ENCODE measurements at regions of chr5 and their contacts with region 1.

Region 1: DNA sequence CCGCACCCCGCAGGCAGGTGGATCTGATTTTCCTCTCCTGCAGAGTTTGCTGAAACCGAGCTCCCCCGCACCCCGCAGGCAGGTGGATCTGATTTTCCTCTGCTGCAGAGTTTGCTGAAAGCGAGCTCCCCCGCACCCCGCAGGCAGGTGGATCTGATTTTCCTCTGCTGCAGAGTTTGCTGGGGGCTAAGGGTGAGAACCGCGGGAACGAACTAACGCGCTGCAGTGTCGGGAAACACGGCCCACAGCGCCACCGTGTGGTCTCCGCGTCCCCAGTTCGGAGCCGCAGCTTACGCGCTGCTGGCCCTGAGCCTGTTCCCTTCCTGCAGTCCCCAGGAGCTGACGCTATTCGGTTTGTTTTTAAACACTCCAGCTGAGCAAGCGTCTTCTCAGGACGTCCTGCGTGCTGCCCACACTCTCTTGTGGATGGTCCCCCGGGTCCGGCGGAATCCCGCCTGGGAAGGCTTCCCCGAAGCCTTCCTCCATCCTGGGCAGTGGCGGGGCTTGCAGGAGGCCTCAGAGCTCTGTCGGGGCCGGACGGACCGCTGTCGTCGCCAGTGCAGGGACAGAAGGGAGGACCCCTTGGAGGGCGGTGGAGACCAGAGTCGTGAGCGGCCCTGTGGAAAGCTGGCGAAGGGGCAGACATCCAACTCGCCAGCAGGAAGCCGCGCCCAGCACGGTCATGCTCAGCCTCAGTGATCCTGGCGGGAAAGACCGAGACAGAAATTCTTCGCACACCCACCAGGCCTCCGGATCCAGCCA is 121.2 kb upstream of the LPCAT1 start:
- DNase-seq: peak; percentile 91
- H3K4me3 ChIP-seq: peak overlapping the region; percentile 22 to 54; a peak in 3 of 4 replicates
- H3K27ac ChIP-seq: no peak overlapping the region
- H3K4me1 ChIP-seq: peaks cover 0 to 4% of the 10 kb centered on the region in 2 experiments; a peak in 1 of 4 replicates
- H3K27me3 ChIP-seq: peaks cover 25% of the 10 kb centered on the region
- CTCF ChIP-seq: peak; percentile 73
- EP300 ChIP-seq: no peak
- RAD21 ChIP-seq: peak; percentile 84

Region 2: DNA sequence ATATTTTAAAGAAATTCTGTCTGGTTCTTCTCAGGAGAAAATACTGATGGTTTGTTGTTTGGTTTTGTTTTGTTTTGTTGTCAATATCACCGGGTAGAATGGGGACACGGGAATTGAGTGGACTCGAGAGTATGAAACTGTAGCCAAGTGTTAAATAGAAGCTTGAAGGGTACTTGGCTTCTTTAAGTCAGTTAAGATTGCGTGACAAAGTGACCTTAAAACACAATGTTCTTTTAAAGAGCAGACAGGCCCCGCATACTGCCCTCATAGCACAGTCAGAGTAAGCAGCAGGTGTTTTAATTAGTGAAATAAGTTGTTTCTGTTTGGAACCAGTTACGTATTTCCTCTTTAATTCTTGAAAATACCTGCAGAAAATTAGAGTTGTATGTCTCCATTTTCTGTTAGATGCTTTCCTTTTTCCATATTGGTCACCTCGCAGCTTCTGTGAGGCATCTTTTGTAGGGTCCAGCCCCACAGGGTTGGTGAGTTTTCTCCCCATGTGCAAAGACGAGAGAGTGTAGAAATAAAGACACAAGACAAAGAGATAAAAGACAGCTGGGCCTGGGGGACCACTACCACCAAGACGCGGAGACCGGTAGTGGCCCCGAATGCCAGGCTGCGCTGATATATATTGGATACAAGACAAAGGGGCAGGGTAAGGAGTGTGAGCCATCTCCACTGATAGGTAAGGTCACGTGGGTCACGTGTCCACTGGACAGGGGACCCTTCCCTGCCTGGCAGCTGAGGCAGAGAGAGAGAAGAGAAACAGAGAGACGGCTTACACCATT is 742.7 kb before region 1 on chr5:
- CTCF ChIA-PET with region 1: no interaction called
- POLR2A ChIA-PET with region 1: no interaction called
- DNase-seq: no peak
- H3K4me3 ChIP-seq: no peak overlapping the region
- H3K27ac ChIP-seq: no peak overlapping the region
- H3K4me1 ChIP-seq: no peaks in the 10 kb centered on the region
- H3K27me3 ChIP-seq: no peaks in the 10 kb centered on the region
- CTCF ChIP-seq: no peak
- EP300 ChIP-seq: no peak
- RAD21 ChIP-seq: no peak

Region 3: GRCh38 chr5:1204693-1205242 is 440.2 kb before region 1 on chr5:
- CTCF ChIA-PET with region 1: interaction called, 23 read pairs
- POLR2A ChIA-PET with region 1: no interaction called
- DNase-seq: peak; percentile 76
- H3K4me3 ChIP-seq: no peak overlapping the region
- H3K27ac ChIP-seq: no peak overlapping the region
- H3K4me1 ChIP-seq: no peaks in the 10 kb centered on the region
- H3K27me3 ChIP-seq: peaks cover 59% of the 10 kb centered on the region
- CTCF ChIP-seq: peak; percentile 21
- EP300 ChIP-seq: no peak
- RAD21 ChIP-seq: peak; percentile 41

Region 4: DNA sequence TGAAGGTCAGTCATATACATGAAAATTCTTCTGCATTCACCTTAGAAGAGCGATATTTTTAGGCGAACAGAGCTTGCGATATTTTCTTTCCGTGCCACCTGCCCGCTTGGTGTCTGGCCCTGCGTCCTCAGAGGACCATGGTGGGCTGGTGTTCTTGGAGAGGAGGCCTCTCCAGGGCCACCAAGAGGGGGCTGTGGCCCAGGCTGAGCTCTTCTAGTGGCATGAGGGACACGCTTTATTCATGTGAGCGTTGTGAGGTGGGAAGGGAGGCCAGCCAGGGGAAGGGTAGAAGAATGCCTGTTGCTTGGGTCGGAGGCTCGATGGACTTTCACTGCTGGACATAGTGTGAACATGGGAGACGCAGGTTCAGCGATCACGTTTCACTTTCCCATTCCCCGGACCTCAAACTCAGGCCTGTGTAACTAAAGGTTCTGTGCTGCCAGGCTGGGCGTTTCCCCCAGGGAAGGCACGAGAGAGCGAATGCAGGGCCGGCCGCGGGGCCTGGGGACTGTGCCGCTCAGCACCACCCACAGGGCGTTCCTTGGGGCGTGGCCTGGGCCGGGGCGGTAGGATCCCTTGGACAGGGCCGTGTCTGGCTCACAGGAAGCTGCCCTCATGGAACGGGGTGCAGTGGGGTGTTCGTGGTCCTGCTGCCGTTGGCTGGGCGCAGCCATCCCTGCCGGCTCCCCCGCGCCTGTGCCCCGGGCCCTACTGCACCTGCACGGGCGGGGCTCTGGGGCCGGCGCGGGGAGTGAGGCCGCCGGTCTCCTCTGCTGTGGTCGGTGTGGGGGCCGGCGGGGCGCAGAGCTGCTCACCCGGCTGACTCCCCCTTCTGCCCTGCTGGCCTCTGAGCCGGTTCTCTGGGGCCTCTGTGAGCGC is 259.4 kb before region 1 on chr5:
- CTCF ChIA-PET with region 1: interaction called, 12 read pairs
- POLR2A ChIA-PET with region 1: no interaction called
- DNase-seq: peak; percentile 93
- H3K4me3 ChIP-seq: peak overlapping the region; percentile 50 to 59
- H3K27ac ChIP-seq: no peak overlapping the region; a peak in 1 of 4 replicates
- H3K4me1 ChIP-seq: peaks cover 0 to 10% of the 10 kb centered on the region in 2 experiments; a peak in 1 of 4 replicates
- H3K27me3 ChIP-seq: peaks cover 16% of the 10 kb centered on the region
- CTCF ChIP-seq: no peak
- EP300 ChIP-seq: no peak
- RAD21 ChIP-seq: no peak

Region 5: DNA sequence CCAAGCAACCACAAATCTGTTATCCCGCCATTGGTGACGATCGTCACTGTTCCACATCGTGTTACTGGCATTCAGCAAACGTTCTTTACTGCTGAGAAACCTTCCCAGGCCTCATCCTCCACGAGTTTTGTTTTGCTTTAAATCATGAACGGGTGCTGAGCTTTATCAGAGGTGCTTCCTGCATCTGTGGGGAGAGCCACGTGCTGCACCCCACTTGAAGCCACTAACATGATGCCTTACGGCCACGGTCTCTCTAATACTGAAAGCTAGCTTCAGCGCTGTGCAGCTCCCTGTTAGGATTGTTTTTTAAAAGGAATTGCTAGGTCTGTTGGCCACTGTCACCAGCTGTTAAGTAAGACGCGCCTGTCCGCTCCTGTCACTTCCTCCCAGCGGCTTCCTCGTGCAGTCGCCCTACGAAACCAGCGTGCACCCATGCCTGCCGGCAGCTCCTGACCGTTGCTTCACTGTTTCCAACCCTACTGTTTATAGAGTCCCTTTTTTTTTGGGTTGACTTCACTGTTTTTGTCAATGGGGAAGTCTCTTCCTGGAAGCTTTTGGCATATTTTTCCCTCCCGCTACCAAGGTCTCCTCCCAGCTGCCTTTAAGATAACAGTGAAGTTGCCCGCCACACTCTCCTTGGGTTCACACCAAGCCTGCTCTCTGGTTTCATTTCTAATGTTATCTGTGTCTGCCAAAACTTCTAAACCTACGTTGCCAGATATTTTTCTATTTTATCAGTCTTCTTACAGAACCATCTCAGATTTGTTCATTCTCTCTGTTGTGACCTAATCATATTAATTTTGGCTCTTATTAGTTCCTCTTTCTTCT is 141.5 kb before region 1 on chr5:
- CTCF ChIA-PET with region 1: interaction called, 11 read pairs
- POLR2A ChIA-PET with region 1: no interaction called
- DNase-seq: no peak
- H3K4me3 ChIP-seq: no peak overlapping the region
- H3K27ac ChIP-seq: no peak overlapping the region
- H3K4me1 ChIP-seq: no peaks in the 10 kb centered on the region; a peak in 1 of 4 replicates
- H3K27me3 ChIP-seq: no peaks in the 10 kb centered on the region
- CTCF ChIP-seq: no peak
- EP300 ChIP-seq: no peak
- RAD21 ChIP-seq: no peak

Region 6: GRCh38 chr5:1668141-1668721 is 23.2 kb after region 1 on chr5:
- CTCF ChIA-PET with region 1: interaction called, 11 read pairs
- POLR2A ChIA-PET with region 1: no interaction called
- DNase-seq: peak; percentile 15
- H3K4me3 ChIP-seq: no peak overlapping the region
- H3K27ac ChIP-seq: no peak overlapping the region
- H3K4me1 ChIP-seq: no peaks in the 10 kb centered on the region
- H3K27me3 ChIP-seq: peaks cover 83% of the 10 kb centered on the region
- CTCF ChIP-seq: no peak
- EP300 ChIP-seq: no peak
- RAD21 ChIP-seq: no peak

Measured in SK-N-SH (cell line).